ENCODE measurements at regions of chr17 and their contacts with region 1.

Region 1: DNA sequence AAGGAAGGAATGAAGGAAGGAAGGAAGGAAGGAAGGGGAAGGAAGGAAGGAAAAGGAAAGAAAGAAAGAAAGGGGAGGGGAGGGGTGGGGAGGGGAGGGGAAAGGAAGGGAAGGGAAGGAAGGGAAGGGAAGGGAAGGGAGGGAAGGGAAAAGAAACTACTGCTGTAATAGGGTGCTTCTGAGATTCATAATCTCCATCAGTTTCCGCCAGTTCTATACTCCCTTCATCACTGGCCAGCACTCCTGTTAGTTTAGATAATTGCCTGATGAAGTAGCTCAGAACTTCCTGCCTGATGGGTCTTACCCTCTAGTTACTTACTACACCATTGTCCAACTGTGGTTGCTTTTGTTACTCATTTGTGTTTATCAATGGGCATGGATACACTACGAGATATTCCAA is 2.0 kb upstream of the KRTAP9-6 start:
- DNase-seq: no peak
- ATAC-seq: no peak
- H3K4me3 ChIP-seq: no peak overlapping the region
- H3K27ac ChIP-seq: no peak overlapping the region
- H3K4me1 ChIP-seq: no peaks in the 10 kb centered on the region
- H3K27me3 ChIP-seq: peaks cover 0 to 15% (median 5%) of the 10 kb centered on the region in 3 donors
- CTCF ChIP-seq: no peak

Region 2: GRCh38 chr17:41278176-41278955 is 15.2 kb after region 1 on chr17:
- intact Hi-C with region 1: loop called in 1 of 2 experiments (anchors 2 kb)
- DNase-seq: no peak
- ATAC-seq: no peak
- H3K4me3 ChIP-seq: no peak overlapping the region
- H3K27ac ChIP-seq: no peak overlapping the region
- H3K4me1 ChIP-seq: no peaks in the 10 kb centered on the region
- H3K27me3 ChIP-seq: peaks cover 0 to 19% (median 4%) of the 10 kb centered on the region in 3 donors
- CTCF ChIP-seq: no peak